IMR-90 (cell line): ENCODE measurements at regions of chr3 and their contacts with region 1.

Region 1: GRCh38 chr3:30606301-30607031 is at the start of gene TGFBR2:
- DNase-seq: peak; percentile 99
- ATAC-seq: peak; percentile 95
- H3K4me3 ChIP-seq: peak within 1 kb of the TSS; percentile 84
- H3K27ac ChIP-seq: peak within 1 kb of the TSS; percentile 96
- H3K4me1 ChIP-seq: peaks cover 6% of the 10 kb centered on the region
- H3K27me3 ChIP-seq: no peaks in the 10 kb centered on the region
- CTCF ChIP-seq: peak; percentile 39
- POLR2A ChIP-seq: peak; percentile 41; the same call in 1 of the 2 replicates
- RAD21 ChIP-seq: peak; percentile 50
- total RNA-seq, gene TGFBR2: 87.5 and 89.7 TPM in 2 replicates

Region 2: DNA sequence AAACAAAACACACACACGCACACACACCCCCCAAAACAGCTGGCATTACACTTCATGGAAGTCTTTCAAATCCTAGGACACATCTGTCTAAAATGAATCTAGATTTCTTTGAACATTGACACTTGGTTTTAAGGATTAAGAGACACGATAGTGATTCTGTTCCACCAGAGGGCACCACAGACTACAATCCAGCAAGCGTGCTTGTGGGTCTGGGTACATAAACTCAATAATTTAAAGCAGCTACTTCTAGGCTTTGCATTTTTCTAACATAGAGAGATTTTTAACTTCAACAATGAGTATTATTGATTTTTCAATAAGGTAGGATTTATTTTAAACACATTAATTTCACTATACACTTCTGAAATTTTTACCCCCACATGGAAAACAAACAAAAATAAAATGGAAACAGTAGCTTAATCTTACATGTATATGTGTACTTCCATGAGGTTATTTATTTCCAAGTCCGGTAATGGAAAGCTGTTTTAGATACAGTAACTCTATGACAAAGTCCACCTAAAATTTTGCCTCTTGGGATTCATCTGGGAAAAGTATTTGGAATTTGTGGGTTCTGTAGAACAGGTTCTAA is 564.1 kb before region 1 on chr3:
- CTCF ChIA-PET with region 1: no interaction called
- POLR2A ChIA-PET with region 1: no interaction called
- dilution Hi-C with region 1: no loop called
- in situ Hi-C with region 1: no loop called
- intact Hi-C with region 1: loop called (anchors 1 kb)
- DNase-seq: peak; percentile 79
- ATAC-seq: peak; percentile 81
- H3K4me3 ChIP-seq: no peak overlapping the region
- H3K27ac ChIP-seq: no peak overlapping the region
- H3K4me1 ChIP-seq: no peaks in the 10 kb centered on the region
- H3K27me3 ChIP-seq: no peaks in the 10 kb centered on the region
- CTCF ChIP-seq: peak; percentile 88
- POLR2A ChIP-seq: no peak
- RAD21 ChIP-seq: peak; percentile 92

Region 3: GRCh38 chr3:30199096-30199759 is 407.2 kb before region 1 on chr3:
- CTCF ChIA-PET with region 1: interaction called, 4 read pairs
- POLR2A ChIA-PET with region 1: interaction called, 4 read pairs
- dilution Hi-C with region 1: no loop called
- in situ Hi-C with region 1: no loop called
- intact Hi-C with region 1: loop called (anchors 5 kb)
- DNase-seq: peak; percentile 55
- ATAC-seq: peak; percentile 40; the same call in 1 of the 2 replicates
- H3K4me3 ChIP-seq: no peak overlapping the region
- H3K27ac ChIP-seq: no peak overlapping the region
- H3K4me1 ChIP-seq: peaks cover 6% of the 10 kb centered on the region
- H3K27me3 ChIP-seq: no peaks in the 10 kb centered on the region
- CTCF ChIP-seq: peak; percentile 84
- POLR2A ChIP-seq: no peak
- RAD21 ChIP-seq: peak; percentile 83

Region 4: DNA sequence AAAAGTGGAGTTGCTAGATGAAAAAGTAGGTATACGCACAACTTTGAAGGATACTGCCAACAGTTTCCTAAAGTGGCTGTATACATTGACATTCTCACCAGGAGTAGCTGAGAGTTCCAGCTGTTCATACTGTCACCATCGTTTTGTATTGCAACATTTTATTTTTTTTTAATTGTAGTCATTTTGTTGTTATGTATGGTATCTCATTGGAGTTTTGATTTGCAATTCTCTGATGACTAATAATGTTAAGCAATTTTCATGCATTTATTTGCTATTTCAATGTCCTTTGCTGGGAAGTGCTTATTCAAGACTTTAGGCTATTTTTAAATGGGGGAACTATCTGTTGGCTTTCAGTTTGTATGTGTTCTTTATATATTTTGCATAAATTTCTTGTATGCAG is 185.2 kb before region 1 on chr3:
- CTCF ChIA-PET with region 1: no interaction called
- POLR2A ChIA-PET with region 1: no interaction called
- dilution Hi-C with region 1: no loop called
- in situ Hi-C with region 1: no loop called
- intact Hi-C with region 1: loop called (anchors 5 kb)
- DNase-seq: peak; percentile 84
- ATAC-seq: peak; percentile 73
- H3K4me3 ChIP-seq: no peak overlapping the region
- H3K27ac ChIP-seq: no peak overlapping the region
- H3K4me1 ChIP-seq: peaks cover 6% of the 10 kb centered on the region
- H3K27me3 ChIP-seq: no peaks in the 10 kb centered on the region
- CTCF ChIP-seq: no peak
- POLR2A ChIP-seq: no peak
- RAD21 ChIP-seq: no peak

Region 5: DNA sequence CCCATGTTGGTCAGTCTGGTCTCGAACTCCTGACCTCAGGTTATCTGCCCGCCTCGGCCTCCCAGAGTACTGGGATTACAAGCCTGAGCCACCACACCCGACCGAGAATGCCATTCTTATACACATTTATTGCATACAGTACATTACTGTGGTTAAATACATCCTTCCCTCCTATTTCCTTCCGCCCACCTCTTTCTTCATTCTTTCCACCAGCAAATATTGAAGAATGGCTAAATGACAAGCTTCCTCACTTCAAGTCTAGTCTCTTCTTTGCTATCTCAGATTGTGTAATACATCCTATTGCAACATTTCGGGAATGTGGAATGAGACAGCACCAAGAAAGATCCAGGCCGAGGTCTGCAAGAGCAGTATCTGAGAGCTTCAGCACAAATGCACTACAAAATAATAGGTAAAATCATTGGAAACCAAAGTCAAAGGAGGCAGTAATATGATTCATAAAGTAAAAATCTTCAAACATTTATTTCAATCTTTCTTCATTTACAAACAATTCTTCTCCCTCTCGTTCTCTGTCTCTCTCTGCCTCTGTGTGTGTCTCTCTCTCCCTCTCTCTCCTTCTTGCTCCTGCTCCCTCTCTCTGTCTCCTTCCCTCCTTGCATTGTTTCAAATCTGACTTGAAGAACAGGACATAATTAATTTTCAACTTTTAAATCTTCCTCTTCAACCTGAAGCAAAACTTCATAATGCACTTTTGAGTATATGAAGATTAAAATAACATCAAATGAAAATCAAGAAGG is 94.8 kb before region 1 on chr3:
- CTCF ChIA-PET with region 1: no interaction called
- POLR2A ChIA-PET with region 1: interaction called, 3 read pairs
- dilution Hi-C with region 1: no loop called
- in situ Hi-C with region 1: no loop called
- intact Hi-C with region 1: loop called (anchors 5 kb)
- DNase-seq: peak; percentile 98
- ATAC-seq: peak; percentile 88
- H3K4me3 ChIP-seq: no peak overlapping the region
- H3K27ac ChIP-seq: peak overlapping the region; percentile 86; the same call in 1 of the 2 replicates
- H3K4me1 ChIP-seq: peaks cover 6% of the 10 kb centered on the region
- H3K27me3 ChIP-seq: no peaks in the 10 kb centered on the region
- CTCF ChIP-seq: no peak
- POLR2A ChIP-seq: no peak
- RAD21 ChIP-seq: peak; percentile 24; the same call in 1 of the 2 replicates

Region 6: GRCh38 chr3:30681643-30682211 is 75.3 kb after region 1 on chr3:
- CTCF ChIA-PET with region 1: interaction called, 3 read pairs
- POLR2A ChIA-PET with region 1: no interaction called
- dilution Hi-C with region 1: no loop called
- in situ Hi-C with region 1: no loop called
- intact Hi-C with region 1: loop called (anchors 2 kb)
- DNase-seq: peak; percentile 27
- ATAC-seq: peak; percentile 35
- H3K4me3 ChIP-seq: no peak overlapping the region
- H3K27ac ChIP-seq: peak overlapping the region; percentile 18; the same call in 1 of the 2 replicates
- H3K4me1 ChIP-seq: peaks cover 19% of the 10 kb centered on the region
- H3K27me3 ChIP-seq: no peaks in the 10 kb centered on the region
- CTCF ChIP-seq: no peak
- POLR2A ChIP-seq: no peak
- RAD21 ChIP-seq: no peak

Region 7: GRCh38 chr3:30871720-30872119 is 265.3 kb after region 1 on chr3:
- CTCF ChIA-PET with region 1: no interaction called
- POLR2A ChIA-PET with region 1: no interaction called
- dilution Hi-C with region 1: no loop called
- in situ Hi-C with region 1: no loop called
- intact Hi-C with region 1: no loop called
- DNase-seq: no peak
- ATAC-seq: no peak
- H3K4me3 ChIP-seq: no peak overlapping the region
- H3K27ac ChIP-seq: no peak overlapping the region
- H3K4me1 ChIP-seq: no peaks in the 10 kb centered on the region
- H3K27me3 ChIP-seq: peaks cover 2% of the 10 kb centered on the region
- CTCF ChIP-seq: no peak
- POLR2A ChIP-seq: no peak
- RAD21 ChIP-seq: no peak